OCI-LY7 (cell line): ENCODE measurements at regions of chr15 and their contacts with region 1.

Region 1: GRCh38 chr15:90320061-90320884 is 31.8 kb upstream of the ZNF774 start:
- DNase-seq: peak; percentile 84
- H3K4me3 ChIP-seq: no peak overlapping the region
- H3K27ac ChIP-seq: no peak overlapping the region
- H3K4me1 ChIP-seq: peaks cover 3% of the 10 kb centered on the region
- CTCF ChIP-seq: peak; percentile 99

Region 2: GRCh38 chr15:89566141-89566540 is 754.1 kb before region 1 on chr15:
- CTCF ChIA-PET with region 1: no interaction called
- POLR2A ChIA-PET with region 1: no interaction called
- intact Hi-C with region 1: loop called (anchors 10 kb)
- DNase-seq: no peak
- H3K4me3 ChIP-seq: no peak overlapping the region
- H3K27ac ChIP-seq: no peak overlapping the region
- H3K4me1 ChIP-seq: no peaks in the 10 kb centered on the region
- CTCF ChIP-seq: no peak

Region 3: GRCh38 chr15:90482124-90483011 is 162.1 kb after region 1 on chr15:
- CTCF ChIA-PET with region 1: interaction called, 23 read pairs
- POLR2A ChIA-PET with region 1: no interaction called
- intact Hi-C with region 1: loop called (anchors 1 kb)
- DNase-seq: peak; percentile 60
- H3K4me3 ChIP-seq: no peak overlapping the region
- H3K27ac ChIP-seq: no peak overlapping the region
- H3K4me1 ChIP-seq: peaks cover 22% of the 10 kb centered on the region
- CTCF ChIP-seq: peak; percentile 94

Region 4: DNA sequence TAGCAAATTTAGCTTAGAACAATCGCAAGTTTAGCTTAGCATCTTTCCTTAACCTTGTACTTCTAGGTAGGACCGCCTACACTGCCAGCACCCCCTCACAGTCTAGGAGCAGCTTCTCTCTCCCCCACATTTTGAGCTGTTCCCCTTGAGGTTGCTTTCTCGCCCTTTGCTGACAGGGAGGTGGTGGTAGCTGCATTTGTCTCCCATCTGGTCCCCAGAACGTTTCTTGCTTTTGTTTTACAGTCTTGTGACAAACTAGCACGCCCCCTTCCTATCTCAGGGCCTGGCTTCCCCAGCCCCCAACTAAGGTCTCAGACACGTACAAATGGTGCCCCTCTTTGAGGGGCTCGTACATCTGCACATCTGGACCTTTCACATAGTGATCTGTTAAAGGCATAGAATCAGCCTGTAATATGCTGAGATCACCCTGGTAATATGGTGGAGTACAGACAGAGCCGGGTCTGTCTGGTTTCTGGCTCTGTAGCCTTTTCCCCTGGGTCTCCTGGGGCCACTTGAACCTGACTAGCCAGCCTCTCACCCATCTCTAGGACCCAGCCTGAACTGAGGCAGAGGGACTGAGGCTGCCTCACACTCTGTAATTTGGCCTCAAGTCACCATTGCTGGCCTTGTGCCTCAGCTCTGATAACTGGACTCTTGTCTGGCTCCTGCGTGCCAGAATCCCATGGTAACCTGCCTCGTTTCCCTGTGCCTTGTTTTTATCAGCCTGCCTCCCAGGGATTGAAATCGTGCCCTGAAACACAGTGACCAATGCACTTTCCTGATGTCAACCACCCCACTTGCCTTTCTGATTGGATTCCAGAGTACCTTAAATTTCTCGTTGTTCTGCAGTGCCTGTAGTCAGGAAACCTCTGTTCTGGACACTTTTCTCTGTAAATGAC is 237.2 kb after region 1 on chr15:
- CTCF ChIA-PET with region 1: no interaction called
- POLR2A ChIA-PET with region 1: no interaction called
- intact Hi-C with region 1: no loop called
- DNase-seq: no peak
- H3K4me3 ChIP-seq: no peak overlapping the region
- H3K27ac ChIP-seq: no peak overlapping the region
- H3K4me1 ChIP-seq: peaks cover 7% of the 10 kb centered on the region
- CTCF ChIP-seq: no peak

Region 5: GRCh38 chr15:90598031-90598577 is 277.8 kb after region 1 on chr15:
- CTCF ChIA-PET with region 1: no interaction called
- POLR2A ChIA-PET with region 1: interaction called, 4 read pairs
- intact Hi-C with region 1: loop called (anchors 1 kb)
- DNase-seq: peak; percentile 57
- H3K4me3 ChIP-seq: peak overlapping the region; percentile 27
- H3K27ac ChIP-seq: peak overlapping the region; percentile 91
- H3K4me1 ChIP-seq: peaks cover 56% of the 10 kb centered on the region
- CTCF ChIP-seq: peak; percentile 51; the same call in 1 of the 2 replicates

Region 6: GRCh38 chr15:90648137-90649070 is 328.1 kb after region 1 on chr15:
- CTCF ChIA-PET with region 1: no interaction called
- POLR2A ChIA-PET with region 1: no interaction called
- intact Hi-C with region 1: loop called (anchors 5 kb)
- DNase-seq: peak; percentile 84
- H3K4me3 ChIP-seq: no peak overlapping the region
- H3K27ac ChIP-seq: no peak overlapping the region
- H3K4me1 ChIP-seq: peaks cover 7% of the 10 kb centered on the region
- CTCF ChIP-seq: peak; percentile 97

Region 7: DNA sequence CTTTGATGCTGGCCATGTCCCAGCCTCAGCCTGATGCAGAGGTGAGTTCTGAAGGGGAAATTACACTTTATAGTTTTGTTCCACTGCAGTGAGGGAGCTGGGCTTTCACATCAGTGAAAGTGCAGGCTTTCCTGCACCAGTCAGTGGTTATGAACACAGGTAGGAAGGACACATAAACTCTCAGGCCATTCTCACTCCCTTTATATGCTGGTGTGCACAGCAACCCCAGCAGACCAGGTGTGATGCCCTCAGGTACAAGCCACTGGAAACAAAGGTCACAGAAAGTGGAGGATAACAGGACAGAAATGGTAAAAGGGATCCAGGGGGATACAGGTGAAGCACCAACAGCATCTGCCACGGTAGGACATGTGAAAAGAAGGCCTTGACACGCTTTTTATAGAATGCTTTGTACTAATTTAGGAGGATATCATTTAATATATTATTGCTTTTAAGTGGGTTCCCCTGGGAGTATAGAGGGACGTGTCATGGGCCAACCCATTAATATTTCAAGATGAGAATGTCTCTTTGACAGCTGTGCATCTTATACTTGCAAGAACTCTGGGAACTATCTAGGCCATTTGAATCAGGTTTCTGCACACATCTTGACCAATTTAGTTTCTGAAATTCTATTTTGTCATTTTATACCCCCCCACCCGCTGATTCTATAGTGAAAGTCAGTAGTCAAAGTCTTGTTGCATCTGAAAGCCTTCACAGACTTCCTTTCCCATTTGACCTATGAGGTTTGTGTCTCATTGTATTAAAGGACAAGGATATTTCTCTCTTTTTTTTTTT is 371.9 kb after region 1 on chr15:
- CTCF ChIA-PET with region 1: no interaction called
- POLR2A ChIA-PET with region 1: interaction called, 4 read pairs
- intact Hi-C with region 1: loop called (anchors 2 kb)
- DNase-seq: no peak
- H3K4me3 ChIP-seq: no peak overlapping the region
- H3K27ac ChIP-seq: no peak overlapping the region
- H3K4me1 ChIP-seq: no peaks in the 10 kb centered on the region
- CTCF ChIP-seq: no peak